ENCODE measurements at regions of chr12 and their contacts with region 1.

Region 1: DNA sequence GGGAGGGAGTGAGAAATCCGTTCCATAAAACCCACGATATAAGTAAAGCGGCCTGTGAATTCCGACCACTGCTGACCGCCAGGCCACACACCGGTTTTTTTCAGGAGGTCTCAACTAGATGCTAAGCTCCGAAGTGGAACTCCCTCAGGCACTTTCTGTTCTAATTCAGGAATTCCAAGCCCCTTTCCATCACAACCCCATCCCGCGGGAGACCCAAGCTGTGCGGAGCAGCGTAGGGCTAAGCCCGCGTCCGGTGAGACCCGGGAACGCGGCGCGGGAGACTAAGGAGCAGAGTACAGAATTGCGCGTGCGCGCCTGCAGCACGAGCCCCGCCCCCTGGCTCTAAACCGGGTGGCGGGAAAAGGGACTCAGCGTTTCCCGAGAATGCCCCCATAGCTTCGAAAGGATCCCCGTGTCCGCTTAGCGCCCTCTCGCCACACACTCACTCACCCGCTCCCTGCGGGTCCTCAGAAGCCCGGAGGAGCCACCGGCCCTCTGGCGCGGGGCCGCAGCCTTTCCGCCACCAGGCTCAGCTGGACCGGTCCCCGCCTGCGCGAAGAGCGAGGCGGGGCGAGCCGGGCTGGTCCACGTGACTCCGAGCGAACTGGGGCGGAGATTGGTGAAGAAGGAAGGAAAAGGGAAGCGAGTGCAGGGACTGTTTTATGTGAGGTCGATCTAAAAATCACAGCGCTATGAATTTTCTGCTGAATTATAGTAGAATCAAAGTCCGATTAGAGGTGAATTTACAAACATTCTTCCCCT is at the start of gene TIMELESS:
- DNase-seq: peak; percentile 92

Region 2: GRCh38 chr12:56315622-56316473 is 133.2 kb before region 1 on chr12 and contains the start of gene CNPY2:
- CTCF ChIA-PET with region 1: no interaction called
- POLR2A ChIA-PET with region 1: interaction called, 16 read pairs
- DNase-seq: peak; percentile 92

Region 3: GRCh38 chr12:56333679-56334489 is 115.2 kb before region 1 on chr12 and contains the start of gene PAN2:
- CTCF ChIA-PET with region 1: no interaction called
- POLR2A ChIA-PET with region 1: interaction called, 15 read pairs
- DNase-seq: peak; percentile 95

Region 4: GRCh38 chr12:56431850-56432249 is 17.2 kb before region 1 on chr12:
- CTCF ChIA-PET with region 1: no interaction called
- POLR2A ChIA-PET with region 1: interaction called, 18 read pairs
- DNase-seq: no peak

Region 5: DNA sequence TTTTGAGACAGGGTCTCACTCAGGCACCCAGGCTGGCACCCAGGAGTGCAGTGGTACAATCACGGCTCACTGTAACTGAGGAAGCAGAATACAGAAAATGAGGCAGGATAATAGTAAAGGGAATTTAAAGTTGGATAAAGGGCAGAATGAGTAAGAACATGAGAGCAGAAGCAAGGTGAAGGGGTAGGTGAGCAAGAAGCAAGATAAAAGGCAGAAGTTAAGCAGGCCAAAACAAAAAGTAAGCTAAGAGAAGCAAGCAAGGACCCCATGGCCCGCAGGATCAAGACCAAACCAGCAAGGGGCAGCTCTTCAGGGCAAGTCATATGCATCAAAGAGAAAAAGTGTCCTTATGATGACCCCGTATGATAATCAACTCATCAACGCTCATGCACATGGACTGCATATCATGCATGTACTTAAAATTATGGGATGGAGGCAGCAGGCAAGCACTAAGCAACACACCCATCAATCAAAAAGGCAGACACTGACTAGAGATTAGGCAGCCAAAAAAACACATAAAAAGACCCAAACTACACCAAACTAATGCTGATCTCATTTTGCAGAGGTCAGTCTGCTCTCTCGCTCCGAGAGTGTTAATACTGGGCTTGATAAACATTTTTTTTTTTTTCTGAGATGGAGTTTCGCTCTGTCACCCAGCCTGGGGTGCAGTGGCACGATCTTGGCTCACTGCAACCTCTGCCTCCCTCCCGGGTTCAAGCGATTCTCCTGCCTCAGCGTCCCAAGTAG is 11.4 kb before region 1 on chr12:
- CTCF ChIA-PET with region 1: interaction called, 3 read pairs
- POLR2A ChIA-PET with region 1: interaction called, 18 read pairs
- DNase-seq: no peak

Region 6: DNA sequence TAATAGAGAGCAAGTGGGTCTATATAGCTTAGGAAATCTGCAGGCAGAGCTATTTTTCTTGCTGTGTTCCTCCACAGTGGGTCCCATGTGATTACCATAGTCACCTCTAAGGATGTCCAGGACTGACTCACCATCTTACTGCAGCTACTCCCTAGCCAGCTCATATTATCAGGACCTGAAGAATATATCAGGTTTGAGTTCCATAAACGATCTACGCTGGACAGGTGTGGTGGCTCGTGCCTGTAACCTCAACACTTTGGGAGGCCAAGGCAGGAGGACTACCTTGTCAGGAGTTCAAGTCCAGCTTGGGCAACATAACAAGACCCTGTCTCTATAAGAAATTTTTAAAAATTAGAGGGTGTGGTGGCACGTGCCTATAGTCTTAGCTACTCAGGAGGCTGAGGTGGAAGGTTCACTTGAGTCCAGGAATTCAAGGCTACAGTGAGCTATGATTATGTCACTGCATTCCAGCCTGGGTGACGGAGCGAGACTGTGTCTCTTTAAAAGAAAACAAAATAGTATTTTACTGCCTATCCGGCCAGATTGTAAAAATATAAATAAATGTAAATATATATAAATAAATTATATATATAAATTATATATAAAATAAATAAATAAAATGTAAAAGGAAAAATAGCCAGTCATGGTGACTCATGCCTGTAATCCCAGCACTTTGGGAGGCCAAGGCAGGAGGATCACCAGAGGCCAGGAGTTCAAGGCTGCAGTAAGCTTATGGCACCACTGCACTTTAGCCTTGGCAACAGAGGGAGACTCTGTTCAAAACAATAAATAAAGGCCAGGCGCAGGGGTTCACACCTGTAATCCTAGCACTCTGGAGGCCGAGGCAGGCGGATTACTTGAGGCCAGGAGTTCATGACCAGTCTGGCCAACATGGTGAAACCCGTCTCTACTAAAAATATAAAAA is 12.5 kb after region 1 on chr12:
- CTCF ChIA-PET with region 1: interaction called, 6 read pairs
- POLR2A ChIA-PET with region 1: interaction called, 68 read pairs
- DNase-seq: no peak

Region 7: DNA sequence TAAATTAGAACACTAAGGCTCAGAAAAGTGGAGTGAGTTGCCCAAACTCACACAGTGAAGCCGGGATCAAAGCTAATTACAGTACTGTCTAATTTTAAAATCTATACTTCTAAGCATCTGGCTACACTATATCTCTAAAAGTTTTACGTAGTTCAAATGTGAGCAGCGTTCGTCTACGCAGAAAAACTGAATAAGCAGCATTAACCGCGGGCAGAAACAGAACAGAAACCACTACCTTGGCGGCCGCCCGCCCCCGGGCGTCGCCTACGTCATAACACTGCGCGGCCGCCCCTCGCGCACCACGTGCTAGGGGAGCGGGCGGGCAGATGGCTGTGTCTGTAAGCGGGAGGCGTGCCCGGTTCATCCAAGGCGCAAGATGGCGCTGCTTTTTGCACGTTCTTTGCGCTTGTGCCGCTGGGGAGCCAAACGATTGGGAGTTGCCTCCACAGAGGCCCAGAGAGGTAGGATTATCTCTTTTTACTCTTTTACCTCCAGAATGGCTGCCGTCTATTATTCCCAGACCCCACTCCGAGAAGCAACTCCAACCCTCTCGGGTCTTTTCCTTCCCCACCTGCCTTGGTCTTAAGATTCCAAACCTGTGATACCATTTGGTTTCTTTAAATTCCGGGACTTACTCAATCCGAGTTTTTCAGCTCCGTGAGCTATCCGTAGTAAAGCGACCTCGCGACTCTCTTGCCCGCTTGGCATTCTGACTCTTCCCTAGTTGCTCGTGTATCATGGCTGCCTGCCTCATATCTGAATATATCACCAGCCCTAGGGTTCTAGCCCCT is 19.4 kb after region 1 on chr12 and contains the start of gene SPRYD4:
- CTCF ChIA-PET with region 1: interaction called, 6 read pairs
- POLR2A ChIA-PET with region 1: interaction called, 68 read pairs
- DNase-seq: peak; percentile 96